ENCODE measurements at regions of chr10 and their contacts with region 1.

Region 1: GRCh38 chr10:99711129-99711719 is 20.7 kb downstream of the COX15 start:
- DNase-seq: peak; percentile 39
- H3K4me3 ChIP-seq: no peak overlapping the region
- H3K27ac ChIP-seq: peak overlapping the region in 1 of 2 experiments; percentile 57; a peak in 1 of 4 replicates
- H3K4me1 ChIP-seq: peaks cover 0 to 14% of the 10 kb centered on the region in 2 experiments; a peak in 1 of 4 replicates
- H3K27me3 ChIP-seq: no peaks in the 10 kb centered on the region
- CTCF ChIP-seq: peak; percentile 73
- EP300 ChIP-seq: no peak
- RAD21 ChIP-seq: peak; percentile 79

Region 2: DNA sequence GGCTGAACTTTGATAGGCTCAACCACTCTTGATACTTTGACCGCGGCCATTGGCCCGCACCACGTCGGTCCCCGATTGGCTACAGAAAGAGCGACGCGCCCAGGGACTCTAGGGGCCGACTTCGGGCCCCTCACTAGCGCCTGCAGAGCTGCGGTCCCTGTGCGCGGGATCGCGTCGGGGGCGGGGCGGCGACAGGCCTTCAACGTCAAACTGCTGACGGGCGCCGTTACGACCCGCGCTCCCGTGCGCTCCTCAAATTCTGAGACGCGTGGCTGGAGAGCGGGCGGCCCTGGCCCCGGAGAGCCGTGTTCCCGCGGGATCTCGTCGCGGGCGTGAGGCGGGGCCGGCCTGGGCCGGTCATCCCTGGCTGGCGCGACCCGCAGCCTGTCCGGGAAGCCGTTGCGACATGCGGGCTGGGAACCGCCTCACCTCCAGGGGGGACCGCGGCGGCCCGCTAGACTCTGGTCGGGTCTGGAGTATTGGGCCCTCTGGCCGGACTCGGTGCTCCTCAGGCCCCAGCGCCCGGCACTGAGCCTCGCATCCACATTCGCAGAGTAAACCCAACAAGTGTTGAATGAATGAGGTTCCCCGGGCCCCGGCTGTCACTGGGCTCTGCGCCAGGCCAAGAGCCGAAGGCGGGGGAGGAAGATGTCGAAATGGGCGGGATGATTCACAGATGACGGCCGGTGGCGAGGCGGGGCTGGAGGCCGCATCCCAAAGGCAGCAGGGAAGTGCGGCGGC is 90.3 kb before region 1 on chr10:
- CTCF ChIA-PET with region 1: interaction called, 10 read pairs
- POLR2A ChIA-PET with region 1: no interaction called
- DNase-seq: peak; percentile 90
- H3K4me3 ChIP-seq: peak overlapping the region; percentile 75 to 93
- H3K27ac ChIP-seq: peak overlapping the region; percentile 97 to 98
- H3K4me1 ChIP-seq: peaks cover 5 to 17% of the 10 kb centered on the region in 2 experiments; a peak in 3 of 4 replicates
- H3K27me3 ChIP-seq: no peaks in the 10 kb centered on the region
- CTCF ChIP-seq: no peak
- EP300 ChIP-seq: no peak
- RAD21 ChIP-seq: no peak

Region 3: GRCh38 chr10:99630439-99630838 is 80.8 kb before region 1 on chr10:
- CTCF ChIA-PET with region 1: interaction called, 21 read pairs
- POLR2A ChIA-PET with region 1: no interaction called
- DNase-seq: peak; percentile 39
- H3K4me3 ChIP-seq: no peak overlapping the region
- H3K27ac ChIP-seq: 0 out of 4 replicates have a peak overlapping the region, but pooled peaks of 1 of the 2 experiments have one; percentile 30
- H3K4me1 ChIP-seq: peaks cover 8 to 9% of the 10 kb centered on the region in 2 experiments; a peak in 3 of 4 replicates
- H3K27me3 ChIP-seq: no peaks in the 10 kb centered on the region
- CTCF ChIP-seq: peak; percentile 68
- EP300 ChIP-seq: no peak
- RAD21 ChIP-seq: peak; percentile 75

Region 4: DNA sequence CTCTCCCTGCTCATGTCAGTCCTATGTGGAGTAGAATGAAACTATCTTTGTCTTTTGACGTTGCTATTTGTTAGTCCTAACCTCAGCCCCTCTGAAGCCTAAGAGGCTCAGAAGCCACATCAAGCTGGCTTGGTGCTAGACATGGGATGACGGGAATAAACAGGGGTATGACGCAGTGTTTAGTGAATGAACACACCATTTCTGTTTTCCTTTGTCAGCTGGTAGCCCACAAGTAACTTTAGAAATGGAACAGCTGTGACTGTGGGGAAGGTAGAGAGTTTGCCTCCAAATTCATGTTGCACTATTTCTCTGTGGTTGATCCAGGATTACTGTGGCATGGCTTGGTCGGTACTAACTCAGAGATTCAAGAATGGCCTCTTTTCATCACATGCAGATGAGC is 10.6 kb before region 1 on chr10:
- CTCF ChIA-PET with region 1: interaction called, 14 read pairs
- POLR2A ChIA-PET with region 1: no interaction called
- DNase-seq: no peak
- H3K4me3 ChIP-seq: no peak overlapping the region
- H3K27ac ChIP-seq: no peak overlapping the region
- H3K4me1 ChIP-seq: no peaks in the 10 kb centered on the region; a peak in 1 of 4 replicates
- H3K27me3 ChIP-seq: no peaks in the 10 kb centered on the region
- CTCF ChIP-seq: no peak
- EP300 ChIP-seq: no peak
- RAD21 ChIP-seq: no peak